Caco-2 (cell line): ENCODE measurements at regions of chr1 and their contacts with region 1.

Region 1: DNA sequence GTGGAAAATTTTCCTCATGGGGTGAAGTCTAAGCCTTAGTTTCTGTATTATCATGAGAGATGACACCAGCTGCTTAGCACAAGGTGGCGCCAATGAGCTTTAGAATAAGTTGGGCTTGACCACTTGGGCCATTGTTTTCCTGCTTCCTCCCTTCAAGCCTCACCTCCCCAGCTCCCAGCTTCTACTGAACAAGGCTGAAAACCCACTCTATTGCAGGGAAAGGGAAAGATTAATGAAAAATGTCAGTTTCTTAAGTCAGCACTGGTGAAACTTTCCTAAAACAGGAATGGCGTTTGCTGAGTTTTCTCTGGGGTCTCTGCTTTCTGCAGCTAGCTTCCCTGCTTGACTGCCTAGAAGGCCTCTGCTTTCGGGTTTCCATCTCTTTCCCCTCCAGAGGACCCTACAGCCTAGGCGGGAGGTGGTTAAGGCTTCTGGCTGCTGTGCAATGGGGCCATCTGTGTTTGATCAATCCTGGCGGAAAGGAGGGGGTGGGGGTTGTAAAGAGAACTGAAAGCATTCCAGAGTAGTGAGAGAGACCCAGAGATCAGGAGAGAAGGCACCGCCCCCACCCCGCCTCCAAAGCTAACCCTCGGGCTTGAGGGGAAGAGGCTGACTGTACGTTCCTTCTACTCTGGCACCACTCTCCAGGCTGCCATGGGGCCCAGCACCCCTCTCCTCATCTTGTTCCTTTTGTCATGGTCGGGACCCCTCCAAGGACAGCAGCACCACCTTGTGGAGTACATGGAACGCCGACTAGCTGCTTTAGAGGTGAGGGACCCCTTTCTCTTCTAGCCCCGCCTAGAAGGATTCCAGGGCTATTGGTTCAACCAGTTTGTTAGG is at the start of gene OLFML3:
- DNase-seq: peak; percentile 77 to 83
- H3K4me3 ChIP-seq: peak within 1 kb of the TSS; percentile 18
- H3K4me3 Mint-ChIP-seq: peak within 1 kb of the TSS; percentile 66
- H3K27ac Mint-ChIP-seq: peak within 1 kb of the TSS; percentile 93
- H3K4me1 ChIP-seq: peaks cover 15% of the 10 kb centered on the region
- H3K4me1 Mint-ChIP-seq: no peaks in the 10 kb centered on the region
- H3K27me3 ChIP-seq: no peaks in the 10 kb centered on the region
- H3K27me3 Mint-ChIP-seq: no peaks in the 10 kb centered on the region
- CTCF ChIP-seq: peak; percentile 44 to 63
- total RNA-seq, gene OLFML3: 29.1 and 36.5 TPM in 2 replicates

Region 2: GRCh38 chr1:113940365-113941244 is 38.5 kb before region 1 on chr1:
- CTCF ChIA-PET with region 1: no interaction called
- POLR2A ChIA-PET with region 1: no interaction called
- intact Hi-C with region 1: no loop called
- DNase-seq: no peak
- H3K4me3 ChIP-seq: no peak overlapping the region
- H3K4me3 Mint-ChIP-seq: no peak overlapping the region
- H3K27ac Mint-ChIP-seq: no peak overlapping the region
- H3K4me1 ChIP-seq: peaks cover 6% of the 10 kb centered on the region; the same call in 1 of the 2 replicates
- H3K4me1 Mint-ChIP-seq: peaks cover 7% of the 10 kb centered on the region
- H3K27me3 ChIP-seq: no peaks in the 10 kb centered on the region
- H3K27me3 Mint-ChIP-seq: no peaks in the 10 kb centered on the region
- CTCF ChIP-seq: no peak

Region 3: DNA sequence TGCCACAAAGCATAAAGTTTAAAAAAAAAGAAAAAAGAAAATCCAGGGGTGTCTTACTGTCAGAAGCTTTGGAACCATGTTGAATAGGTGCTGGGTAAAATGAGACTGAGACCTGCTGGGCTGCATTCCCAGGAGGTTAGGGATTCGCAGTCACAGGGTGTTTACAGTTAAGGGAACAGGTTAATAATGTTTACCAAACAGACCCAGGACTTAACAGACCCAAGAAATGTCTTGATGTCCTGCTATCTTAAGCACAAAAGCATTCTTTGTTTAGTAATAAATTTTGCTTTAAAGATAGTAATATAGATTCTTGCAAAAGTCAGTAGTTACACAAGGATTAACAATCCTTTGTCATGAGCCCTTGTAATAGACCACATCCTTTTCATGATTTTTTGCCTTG is 54.9 kb after region 1 on chr1:
- CTCF ChIA-PET with region 1: no interaction called
- POLR2A ChIA-PET with region 1: no interaction called
- intact Hi-C with region 1: loop called (anchors 1 kb)
- DNase-seq: peak; percentile 71 to 72
- H3K4me3 ChIP-seq: no peak overlapping the region
- H3K4me3 Mint-ChIP-seq: no peak overlapping the region
- H3K27ac Mint-ChIP-seq: no peak overlapping the region
- H3K4me1 ChIP-seq: peaks cover 36% of the 10 kb centered on the region
- H3K4me1 Mint-ChIP-seq: no peaks in the 10 kb centered on the region
- H3K27me3 ChIP-seq: no peaks in the 10 kb centered on the region
- H3K27me3 Mint-ChIP-seq: no peaks in the 10 kb centered on the region
- CTCF ChIP-seq: no peak

Region 4: GRCh38 chr1:114219172-114219868 is 240.2 kb after region 1 on chr1:
- CTCF ChIA-PET with region 1: interaction called, 8 read pairs
- POLR2A ChIA-PET with region 1: no interaction called
- intact Hi-C with region 1: loop called (anchors 1 kb)
- DNase-seq: peak in 1 of 2 experiments; percentile 11
- H3K4me3 ChIP-seq: no peak overlapping the region
- H3K4me3 Mint-ChIP-seq: no peak overlapping the region
- H3K27ac Mint-ChIP-seq: no peak overlapping the region
- H3K4me1 ChIP-seq: no peaks in the 10 kb centered on the region
- H3K4me1 Mint-ChIP-seq: no peaks in the 10 kb centered on the region
- H3K27me3 ChIP-seq: no peaks in the 10 kb centered on the region
- H3K27me3 Mint-ChIP-seq: peaks cover 5% of the 10 kb centered on the region
- CTCF ChIP-seq: peak in 1 of 2 experiments; percentile 20

Region 5: GRCh38 chr1:114282751-114283403 is 303.8 kb after region 1 on chr1:
- CTCF ChIA-PET with region 1: interaction called, 31 read pairs
- POLR2A ChIA-PET with region 1: no interaction called
- intact Hi-C with region 1: loop called (anchors 1 kb)
- DNase-seq: peak; percentile 76 to 77
- H3K4me3 ChIP-seq: no peak overlapping the region
- H3K4me3 Mint-ChIP-seq: no peak overlapping the region
- H3K27ac Mint-ChIP-seq: no peak overlapping the region
- H3K4me1 ChIP-seq: no peaks in the 10 kb centered on the region
- H3K4me1 Mint-ChIP-seq: no peaks in the 10 kb centered on the region
- H3K27me3 ChIP-seq: no peaks in the 10 kb centered on the region
- H3K27me3 Mint-ChIP-seq: peaks cover 2% of the 10 kb centered on the region
- CTCF ChIP-seq: peak; percentile 74 to 75